Thyroid gland (tissue), 4 donors: ENCODE measurements at regions of chr9 and their contacts with region 1.

Region 1: DNA sequence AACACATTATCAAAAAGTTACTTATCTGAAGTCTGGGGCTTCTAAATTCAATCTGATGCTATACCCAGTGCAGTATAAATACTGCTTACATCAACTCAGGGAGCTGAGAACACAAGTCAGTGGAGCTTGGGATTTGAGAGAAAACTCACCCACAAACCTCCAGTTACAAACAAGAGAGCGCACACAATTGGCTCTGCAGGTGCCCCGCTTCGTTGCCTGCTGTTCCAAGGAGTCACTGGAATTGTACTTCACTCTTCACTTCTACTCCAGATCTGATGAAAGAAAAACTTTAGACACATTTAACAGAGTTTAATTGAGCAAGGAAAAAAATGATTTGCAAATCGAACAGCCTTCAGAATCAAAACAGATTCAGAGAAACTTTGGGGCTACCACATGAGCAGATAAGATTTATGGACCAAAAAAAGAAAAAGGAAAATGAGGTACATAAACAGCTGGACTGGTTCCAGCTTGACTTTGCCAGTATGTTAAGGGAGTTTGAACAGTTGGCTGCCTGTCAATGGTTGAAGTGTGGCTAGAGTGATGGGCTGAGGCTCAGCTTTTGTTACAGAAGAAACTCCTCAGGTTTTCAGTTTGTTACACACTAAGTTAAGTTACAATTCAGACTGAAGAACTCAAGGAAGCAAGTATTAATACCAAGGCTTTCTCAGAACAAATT is 156.6 kb downstream of the AOPEP start:
- DNase-seq: peak; percentile 88 to 89
- H3K4me3 ChIP-seq: no peak overlapping the region
- H3K27ac ChIP-seq: peak overlapping the region; percentile 37 to 82 (median 81)
- H3K4me1 ChIP-seq: peaks cover 15 to 46% of the 10 kb centered on the region in 2 donors
- H3K27me3 ChIP-seq: no peaks in the 10 kb centered on the region
- CTCF ChIP-seq: no peak
- POLR2A ChIP-seq: peak in 1 of 2 donors; percentile 18

Region 2: GRCh38 chr9:94649100-94649819 is 233.8 kb before region 1 on chr9:
- intact Hi-C with region 1: no loop called
- DNase-seq: no peak
- H3K4me3 ChIP-seq: no peak overlapping the region
- H3K27ac ChIP-seq: no peak overlapping the region
- H3K4me1 ChIP-seq: no peaks in the 10 kb centered on the region
- H3K27me3 ChIP-seq: no peaks in the 10 kb centered on the region
- CTCF ChIP-seq: no peak
- POLR2A ChIP-seq: no peak

Region 3: DNA sequence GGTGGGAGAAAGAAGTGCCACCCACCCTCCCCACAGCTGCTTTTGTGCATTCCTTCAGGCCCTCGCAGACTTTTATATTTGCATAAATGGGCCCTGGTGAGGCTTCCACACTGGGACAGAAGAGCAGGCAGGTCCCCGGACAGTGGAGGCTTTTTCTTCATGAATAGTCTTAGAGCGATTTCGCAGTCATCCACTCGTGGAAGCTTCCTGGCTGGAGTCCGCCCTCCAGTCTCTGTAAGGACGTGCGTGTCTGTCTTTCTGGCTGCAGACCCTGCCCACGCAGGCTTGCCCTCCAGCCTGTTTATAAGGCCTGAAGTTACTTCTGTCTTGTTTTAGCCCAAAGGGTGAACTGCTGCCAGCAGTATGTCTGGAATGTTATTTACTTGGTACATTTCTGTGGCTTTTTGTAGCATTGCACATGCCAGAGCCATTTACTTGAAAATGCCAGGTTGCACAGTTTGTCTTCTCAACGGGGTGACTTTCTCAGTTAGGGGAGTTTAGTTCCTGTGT is 39.0 kb after region 1 on chr9:
- intact Hi-C with region 1: no loop called
- DNase-seq: peak; percentile 88 to 91
- H3K4me3 ChIP-seq: no peak overlapping the region
- H3K27ac ChIP-seq: peak overlapping the region; percentile 94 to 97 (median 96)
- H3K4me1 ChIP-seq: peaks cover 31 to 39% of the 10 kb centered on the region in 2 donors
- H3K27me3 ChIP-seq: no peaks in the 10 kb centered on the region
- CTCF ChIP-seq: peak in 1 of 6 experiments; percentile 13
- POLR2A ChIP-seq: peak in 1 of 2 donors; percentile 57

Region 4: GRCh38 chr9:94993064-94993833 is 110.1 kb after region 1 on chr9:
- intact Hi-C with region 1: loop called (anchors 10 kb)
- DNase-seq: no peak
- H3K4me3 ChIP-seq: no peak overlapping the region
- H3K27ac ChIP-seq: peak overlapping the region; percentile 6 to 86 (median 29)
- H3K4me1 ChIP-seq: peaks cover 19 to 31% of the 10 kb centered on the region in 2 donors
- H3K27me3 ChIP-seq: no peaks in the 10 kb centered on the region
- CTCF ChIP-seq: no peak
- POLR2A ChIP-seq: no peak